ENCODE measurements at regions of chr11 and their contacts with region 1.

Region 1: GRCh38 chr11:94623120-94623735 is 56.1 kb downstream of the PIWIL4 start:
- DNase-seq: peak; percentile 73
- H3K4me3 Mint-ChIP-seq: no peak overlapping the region
- H3K27ac Mint-ChIP-seq: no peak overlapping the region
- H3K4me1 Mint-ChIP-seq: no peaks in the 10 kb centered on the region
- H3K27me3 Mint-ChIP-seq: peaks cover 12% of the 10 kb centered on the region

Region 2: GRCh38 chr11:94647926-94648325 is 24.7 kb after region 1 on chr11:
- CTCF ChIA-PET with region 1: no interaction called
- DNase-seq: no peak
- H3K4me3 Mint-ChIP-seq: no peak overlapping the region
- H3K27ac Mint-ChIP-seq: no peak overlapping the region
- H3K4me1 Mint-ChIP-seq: no peaks in the 10 kb centered on the region
- H3K27me3 Mint-ChIP-seq: peaks cover 4% of the 10 kb centered on the region

Region 3: GRCh38 chr11:94750319-94751218 is 127.3 kb after region 1 on chr11:
- CTCF ChIA-PET with region 1: no interaction called
- DNase-seq: no peak
- H3K4me3 Mint-ChIP-seq: no peak overlapping the region
- H3K27ac Mint-ChIP-seq: no peak overlapping the region
- H3K4me1 Mint-ChIP-seq: no peaks in the 10 kb centered on the region
- H3K27me3 Mint-ChIP-seq: peaks cover 34% of the 10 kb centered on the region

Region 4: GRCh38 chr11:94762208-94762607 is 139.0 kb after region 1 on chr11:
- CTCF ChIA-PET with region 1: interaction called, 24 read pairs
- DNase-seq: no peak
- H3K4me3 Mint-ChIP-seq: no peak overlapping the region
- H3K27ac Mint-ChIP-seq: no peak overlapping the region
- H3K4me1 Mint-ChIP-seq: peaks cover 4% of the 10 kb centered on the region
- H3K27me3 Mint-ChIP-seq: peaks cover 22% of the 10 kb centered on the region

Region 5: GRCh38 chr11:94786264-94787126 is 163.3 kb after region 1 on chr11:
- CTCF ChIA-PET with region 1: interaction called, 14 read pairs
- DNase-seq: no peak
- H3K4me3 Mint-ChIP-seq: no peak overlapping the region
- H3K27ac Mint-ChIP-seq: no peak overlapping the region
- H3K4me1 Mint-ChIP-seq: peaks cover 5% of the 10 kb centered on the region
- H3K27me3 Mint-ChIP-seq: peaks cover 10% of the 10 kb centered on the region

Region 6: DNA sequence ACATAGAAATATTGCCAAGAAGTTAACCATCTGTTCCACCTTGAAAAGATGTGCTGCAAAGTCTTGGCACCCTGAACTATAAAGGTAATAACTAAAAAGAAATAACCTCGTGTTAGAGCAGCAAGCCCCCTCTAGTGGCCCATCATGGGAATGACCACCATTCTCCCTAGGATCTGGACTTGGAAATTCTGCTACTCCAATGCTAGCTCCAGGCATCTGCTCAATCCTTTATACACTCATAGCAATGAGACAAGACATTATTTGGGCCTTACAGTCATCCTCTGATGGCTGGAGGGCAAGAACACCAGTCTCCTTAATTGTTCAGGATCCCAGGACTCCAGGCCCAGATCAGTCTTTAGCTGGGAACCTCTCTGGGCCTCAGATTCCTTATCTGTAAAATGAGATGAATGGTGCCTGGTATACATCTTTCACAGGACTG is 274.1 kb after region 1 on chr11:
- CTCF ChIA-PET with region 1: interaction called, 40 read pairs
- DNase-seq: peak; percentile 57
- H3K4me3 Mint-ChIP-seq: no peak overlapping the region
- H3K27ac Mint-ChIP-seq: no peak overlapping the region
- H3K4me1 Mint-ChIP-seq: no peaks in the 10 kb centered on the region
- H3K27me3 Mint-ChIP-seq: peaks cover 11% of the 10 kb centered on the region

Region 7: DNA sequence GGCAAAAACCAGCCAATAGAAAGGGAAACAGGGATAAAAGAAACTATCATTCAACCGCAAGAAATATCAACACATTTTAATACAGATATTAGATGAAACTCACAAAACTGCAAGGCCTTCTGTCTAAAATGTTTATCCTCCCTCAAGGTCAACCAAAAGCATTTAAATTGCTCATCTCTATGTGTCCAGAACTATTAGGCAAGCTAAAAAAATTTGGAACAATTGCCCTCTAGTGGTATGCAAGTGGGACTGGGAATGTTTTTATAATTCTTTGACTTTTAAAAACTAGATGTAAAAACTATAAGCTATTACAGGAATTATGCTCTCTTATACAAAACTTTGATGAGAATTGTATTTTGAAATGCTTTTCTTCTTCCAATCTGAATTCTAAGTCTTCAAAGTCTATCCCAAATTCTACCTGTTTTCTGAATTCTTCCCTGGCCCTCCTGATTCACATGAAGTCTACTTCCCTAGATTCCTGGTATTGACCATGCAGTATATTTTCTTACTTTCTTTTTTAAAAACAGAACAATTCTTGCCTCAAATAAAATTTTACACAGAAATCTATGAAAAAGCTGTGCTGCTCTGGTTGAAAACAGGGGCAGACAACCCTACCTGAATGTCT is 345.2 kb after region 1 on chr11:
- CTCF ChIA-PET with region 1: interaction called, 12 read pairs
- DNase-seq: no peak
- H3K4me3 Mint-ChIP-seq: no peak overlapping the region
- H3K27ac Mint-ChIP-seq: no peak overlapping the region
- H3K4me1 Mint-ChIP-seq: peaks cover 24% of the 10 kb centered on the region
- H3K27me3 Mint-ChIP-seq: no peaks in the 10 kb centered on the region

Measured in activated naive CD4-positive, alpha-beta T cell treated with anti-CD3 and anti-CD28 coated beads, Interleukin-2, amount 10 ng/mL, durations not matched to agents 7 days and 5 days (primary cell).